Dorsolateral prefrontal cortex (tissue), 120 donors: ENCODE measurements at regions of chr4 and their contacts with region 1.

Region 1: DNA sequence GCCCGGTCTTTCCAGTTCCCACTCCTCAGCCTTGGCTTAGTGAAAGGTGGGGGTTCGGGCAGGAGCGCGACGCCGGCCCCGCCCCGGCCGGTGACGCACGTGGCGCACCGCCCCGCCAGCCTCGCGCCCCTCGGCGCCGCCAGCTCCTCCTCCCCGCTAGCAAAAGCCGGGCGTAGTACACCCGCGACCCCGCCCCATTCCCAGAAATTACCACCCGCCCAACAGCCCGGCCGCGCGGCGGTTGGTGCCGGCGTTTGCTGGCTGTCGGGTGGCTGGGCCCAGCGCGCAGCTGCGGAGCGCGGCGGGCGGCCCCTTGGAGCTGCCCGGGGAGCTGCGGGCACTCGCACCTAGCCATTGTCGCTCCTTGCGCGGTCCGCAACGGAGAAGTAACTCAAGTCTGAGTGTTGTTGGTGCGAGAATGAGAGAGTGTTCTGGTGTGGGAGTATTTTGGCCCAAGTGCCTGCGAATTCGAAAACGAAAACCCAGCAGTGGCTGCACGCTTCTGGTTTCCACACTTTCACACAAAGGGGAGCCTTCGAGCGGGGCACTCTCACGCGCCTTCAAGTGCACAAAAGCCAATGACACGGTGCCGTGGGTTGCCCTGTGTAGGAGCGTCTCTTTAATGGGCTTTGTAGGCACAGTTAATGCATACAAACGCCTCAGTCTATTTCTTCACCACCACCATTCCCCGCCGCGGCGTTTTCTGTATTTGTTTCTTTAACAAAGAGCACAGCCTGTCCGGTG is 1.0 kb upstream of the ELF2 start:
- DNase-seq: peak; percentile 84 to 96 (median 90)
- H3K4me3 ChIP-seq: peak overlapping the region; percentile 55 to 99 (median 94)
- H3K27ac ChIP-seq: peak overlapping the region; percentile 90 to 100 (median 100)
- H3K27me3 ChIP-seq: no peaks in the 10 kb centered on the region
- CTCF ChIP-seq: peak in 29 of 56 donors; percentile 7 to 55 (median 23)

Region 2: GRCh38 chr4:139030614-139031235 is 147.3 kb before region 1 on chr4:
- intact Hi-C with region 1: loop called (anchors 5 kb)
- DNase-seq: peak; percentile 43 to 87 (median 68)
- H3K4me3 ChIP-seq: peak overlapping the region in 9 of 59 donors; percentile 8 to 31 (median 19)
- H3K27ac ChIP-seq: peak overlapping the region in 11 of 59 donors; percentile 16 to 94 (median 79)
- H3K27me3 ChIP-seq: no peaks in the 10 kb centered on the region
- CTCF ChIP-seq: peak; percentile 75 to 96 (median 85)

Region 3: DNA sequence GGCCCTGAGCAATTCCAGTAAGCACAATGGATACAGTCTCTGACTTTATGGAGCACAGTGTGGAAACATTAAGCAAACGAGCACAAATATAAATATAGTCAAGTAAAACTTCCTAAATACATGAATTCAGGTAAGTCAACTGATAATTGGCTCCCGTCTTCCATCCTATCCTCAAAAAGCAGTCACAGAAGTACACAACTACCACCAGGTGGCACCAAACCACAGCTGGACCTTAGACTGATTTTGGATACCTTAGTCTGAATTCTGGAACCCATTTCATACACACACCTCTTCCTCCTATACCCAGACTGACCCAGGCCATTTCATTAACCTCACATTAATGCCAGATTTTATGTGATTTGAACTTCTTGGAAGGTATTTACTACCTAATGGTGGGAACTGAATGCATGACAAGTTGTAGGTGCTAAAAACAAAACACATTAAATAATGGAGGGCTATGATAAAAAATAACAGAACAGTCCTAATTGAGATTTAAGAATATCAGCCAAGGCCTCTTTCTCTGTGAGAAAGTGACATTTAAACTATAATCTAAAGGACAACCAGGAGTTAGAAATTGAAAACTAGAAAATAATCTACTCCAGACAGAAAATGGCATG is 78.6 kb before region 1 on chr4:
- intact Hi-C with region 1: loop called (anchors 5 kb)
- DNase-seq: peak in 9 of 10 donors; percentile 30 to 72 (median 63)
- H3K4me3 ChIP-seq: no peak overlapping the region
- H3K27ac ChIP-seq: peak overlapping the region in 8 of 59 donors; percentile 1 to 39 (median 12)
- H3K27me3 ChIP-seq: no peaks in the 10 kb centered on the region
- CTCF ChIP-seq: peak; percentile 67 to 94 (median 89)

Region 4: DNA sequence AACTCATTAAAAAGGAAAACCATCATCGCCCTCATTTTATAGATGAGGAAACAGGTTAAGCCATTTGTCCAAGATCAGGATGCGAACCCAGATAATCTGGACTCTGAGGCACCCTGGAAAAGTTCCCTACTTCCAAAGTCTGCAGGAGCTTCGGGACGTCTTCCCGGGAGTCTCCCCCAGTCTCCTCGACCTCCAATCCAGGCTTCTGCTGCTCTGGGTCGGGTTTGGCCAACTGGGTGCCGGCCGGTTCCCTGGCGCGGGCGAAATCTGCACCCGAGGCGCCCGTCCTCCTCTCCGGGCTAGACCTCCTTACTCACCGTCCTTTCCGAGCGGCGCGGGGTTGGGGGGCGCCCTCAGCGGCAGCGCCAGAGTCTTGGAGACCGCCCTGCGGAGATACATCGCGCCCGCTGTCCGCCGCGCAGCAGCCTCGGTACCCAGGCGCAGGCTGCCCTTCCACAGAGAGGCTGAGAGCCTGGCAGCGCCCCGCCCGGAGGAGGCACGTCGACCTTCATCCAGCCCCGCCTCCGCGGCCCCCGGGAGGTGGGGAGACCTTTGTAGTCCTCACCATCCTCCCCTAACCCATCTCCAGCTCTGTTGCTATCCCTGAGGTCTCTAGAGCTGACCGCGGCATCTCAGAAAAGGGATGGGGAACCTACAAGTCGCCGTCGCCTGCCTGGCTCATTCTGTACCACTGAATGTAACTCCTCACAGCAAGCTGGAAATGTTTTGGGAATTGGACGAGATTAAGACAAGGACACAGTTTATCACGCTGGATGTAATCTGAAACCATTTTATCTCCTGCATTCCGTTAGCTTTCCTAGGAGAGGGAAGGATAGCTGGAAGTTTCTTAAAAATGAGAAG is 102.0 kb after region 1 on chr4 and contains the start of gene MGARP:
- intact Hi-C with region 1: no loop called
- DNase-seq: peak in 7 of 10 donors; percentile 18 to 84 (median 52)
- H3K4me3 ChIP-seq: peak within 1 kb of the TSS; percentile 27 to 83 (median 65)
- H3K27ac ChIP-seq: peak within 1 kb of the TSS in 9 of 59 donors; percentile 6 to 40 (median 21)
- H3K27me3 ChIP-seq: peaks cover 0 to 17% (median 0%) of the 10 kb centered on the region in 45 donors
- CTCF ChIP-seq: no peak
- total RNA-seq, gene MGARP: 0.67 to 6.9 (median 2.2) TPM in 119 of 120 experiments, not detected in the other

Region 5: DNA sequence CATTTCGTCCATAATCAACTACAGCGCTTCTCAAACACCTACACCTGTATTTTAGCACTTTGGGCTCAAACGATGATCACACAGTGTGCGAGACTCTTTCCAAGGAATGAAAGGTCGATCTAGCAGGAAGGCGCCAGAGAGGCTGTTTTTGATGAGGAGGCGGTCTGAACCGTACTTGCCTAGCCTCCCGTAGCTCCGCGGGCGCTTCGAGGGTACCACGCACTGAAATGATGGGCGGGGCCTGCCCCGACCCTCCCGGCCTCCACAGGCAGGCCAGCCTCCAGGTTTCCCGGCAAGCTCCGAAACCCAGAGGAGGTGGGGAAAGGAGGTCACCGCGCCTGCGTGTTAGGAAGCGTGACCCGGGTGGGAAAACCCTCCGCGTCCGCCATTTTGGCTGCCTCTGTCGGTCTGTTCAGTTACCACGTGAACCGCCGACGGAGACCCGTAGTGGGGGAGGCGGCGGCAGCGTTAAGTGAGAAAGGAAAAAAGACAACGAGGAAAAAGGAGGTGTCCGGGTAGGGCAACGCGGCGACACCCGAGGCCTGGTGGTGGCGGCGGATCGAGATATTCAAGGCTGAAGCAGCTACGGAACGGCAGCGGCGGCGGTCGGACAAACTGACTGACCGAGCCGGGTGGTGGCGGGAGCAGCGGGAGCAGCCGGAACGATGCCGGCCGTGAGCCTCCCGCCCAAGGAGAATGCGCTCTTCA is 123.2 kb after region 1 on chr4 and contains the start of gene NAA15:
- intact Hi-C with region 1: loop called (anchors 2 kb)
- DNase-seq: peak; percentile 95 to 98 (median 96)
- H3K4me3 ChIP-seq: peak within 1 kb of the TSS; percentile 63 to 100 (median 95)
- H3K27ac ChIP-seq: peak within 1 kb of the TSS; percentile 40 to 96 (median 90)
- H3K27me3 ChIP-seq: no peaks in the 10 kb centered on the region
- CTCF ChIP-seq: peak in 42 of 56 donors; percentile 5 to 66 (median 34)
- total RNA-seq, gene NAA15: 28.2 to 47.1 (median 37.9) TPM

Region 6: GRCh38 chr4:139554893-139555704 is 377.1 kb after region 1 on chr4:
- intact Hi-C with region 1: loop called in 1 of 2 experiments (anchors 10 kb)
- DNase-seq: peak; percentile 61 to 91 (median 86)
- H3K4me3 ChIP-seq: peak overlapping the region; percentile 76 to 99 (median 92)
- H3K27ac ChIP-seq: peak overlapping the region; percentile 83 to 99 (median 96)
- H3K27me3 ChIP-seq: no peaks in the 10 kb centered on the region
- CTCF ChIP-seq: peak in 10 of 56 donors; percentile 3 to 28 (median 13)